CD8-positive, alpha-beta memory T cell (primary cell): ENCODE measurements at regions of chr6 and their contacts with region 1.

Region 1: DNA sequence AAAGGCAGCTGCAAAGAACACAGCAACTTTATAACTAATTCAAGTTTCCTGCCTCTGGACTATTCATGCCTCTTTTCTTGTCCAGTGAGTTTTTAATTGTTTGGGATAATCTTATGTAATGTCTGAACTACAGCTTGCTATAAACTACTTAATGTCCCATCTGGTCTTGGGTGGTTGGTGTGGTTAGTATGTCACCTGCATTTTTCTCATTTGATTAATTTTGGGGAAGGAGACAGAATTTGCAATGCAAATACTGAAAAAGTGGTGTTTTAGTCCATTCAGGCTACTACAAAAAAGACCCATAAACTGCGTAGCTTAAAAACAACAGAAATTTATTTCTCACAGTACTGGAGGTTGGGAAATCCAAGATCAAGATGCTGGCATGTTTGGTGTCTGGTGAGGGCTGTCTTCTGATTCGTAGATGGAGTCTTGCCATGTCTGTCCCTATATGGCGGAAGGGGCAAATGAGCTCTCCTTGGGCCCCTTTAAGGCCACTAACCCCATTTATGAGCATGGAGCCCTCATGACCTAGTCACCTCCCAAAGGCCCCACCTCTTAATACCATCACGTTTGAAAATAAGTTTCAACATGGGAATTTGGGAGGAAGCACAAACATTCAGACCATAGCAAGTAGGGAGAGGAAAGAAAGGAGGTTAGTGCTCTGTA is 22.4 kb downstream of the RNF8 start:
- DNase-seq: no peak
- H3K4me3 ChIP-seq: no peak overlapping the region
- H3K4me3 Mint-ChIP-seq: no peak overlapping the region
- H3K27ac ChIP-seq: no peak overlapping the region
- H3K27ac Mint-ChIP-seq: peak overlapping the region in 1 of 8 donors; percentile 71
- H3K4me1 ChIP-seq: no peaks in the 10 kb centered on the region
- H3K4me1 Mint-ChIP-seq: no peaks in the 10 kb centered on the region
- H3K27me3 ChIP-seq: no peaks in the 10 kb centered on the region
- H3K27me3 Mint-ChIP-seq: no peaks in the 10 kb centered on the region

Region 2: DNA sequence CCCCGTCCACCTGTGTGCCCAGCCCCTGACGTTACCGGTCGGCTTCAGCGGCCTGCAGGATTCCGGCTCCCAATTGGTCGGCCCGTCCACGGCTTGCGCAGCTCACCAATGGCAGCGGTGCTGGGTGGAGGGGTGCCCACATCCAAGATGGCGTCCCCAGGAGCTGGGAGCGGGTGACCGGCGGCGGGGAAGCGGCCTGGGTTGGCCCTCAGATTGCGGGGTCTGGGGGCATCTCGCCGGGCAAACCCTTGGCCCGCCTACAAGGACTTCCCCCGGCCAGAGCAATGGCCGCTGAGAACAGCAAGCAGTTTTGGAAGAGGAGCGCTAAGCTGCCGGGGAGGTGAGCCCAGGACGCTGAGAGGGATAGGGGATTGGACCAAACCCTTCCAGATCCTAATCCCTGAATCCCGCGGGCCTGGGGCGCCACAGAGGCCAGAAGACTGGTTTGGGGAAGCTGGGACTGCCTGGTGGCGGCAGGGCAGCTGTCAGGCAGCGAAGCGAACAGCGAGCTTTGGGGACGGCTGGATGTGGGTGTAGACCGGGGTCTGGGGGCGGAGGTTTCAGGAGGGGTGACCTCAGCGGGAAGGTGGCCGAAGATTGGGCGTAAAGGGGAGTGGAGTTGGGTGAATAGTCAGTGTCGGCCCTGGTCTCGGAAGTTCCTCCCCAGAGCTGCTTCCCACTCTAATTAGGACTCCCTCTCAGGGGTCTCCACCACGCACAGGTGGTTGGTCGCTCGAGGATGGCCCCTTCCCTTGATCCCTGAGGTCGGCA is 118.4 kb before region 1 on chr6 and contains the starts of genes TBC1D22B and TMEM217:
- CTCF ChIA-PET with region 1: no interaction called
- POLR2A ChIA-PET with region 1: no interaction called
- DNase-seq: peak; percentile 91 to 97 (median 92)
- H3K4me3 ChIP-seq: peak within 1 kb of the TSS; percentile 95
- H3K4me3 Mint-ChIP-seq: peak within 1 kb of the TSS; percentile 81 to 97 (median 91)
- H3K27ac ChIP-seq: peak within 1 kb of the TSS; percentile 95
- H3K27ac Mint-ChIP-seq: peak within 1 kb of the TSS; percentile 70 to 98 (median 92)
- H3K4me1 ChIP-seq: peaks cover 29% of the 10 kb centered on the region
- H3K4me1 Mint-ChIP-seq: peaks cover 39 to 55% (median 51%) of the 10 kb centered on the region in 3 donors
- H3K27me3 ChIP-seq: no peaks in the 10 kb centered on the region
- H3K27me3 Mint-ChIP-seq: peaks cover 0 to 7% of the 10 kb centered on the region in 2 donors
- total RNA-seq, gene TBC1D22B: 14.4 TPM
- total RNA-seq, gene TMEM217: 4.2 to 6.6 TPM

Region 3: GRCh38 chr6:37347670-37348111 is 28.5 kb before region 1 on chr6:
- CTCF ChIA-PET with region 1: no interaction called
- POLR2A ChIA-PET with region 1: no interaction called
- DNase-seq: no peak
- H3K4me3 ChIP-seq: no peak overlapping the region
- H3K4me3 Mint-ChIP-seq: no peak overlapping the region
- H3K27ac ChIP-seq: no peak overlapping the region
- H3K27ac Mint-ChIP-seq: no peak overlapping the region
- H3K4me1 ChIP-seq: no peaks in the 10 kb centered on the region
- H3K4me1 Mint-ChIP-seq: no peaks in the 10 kb centered on the region
- H3K27me3 ChIP-seq: no peaks in the 10 kb centered on the region
- H3K27me3 Mint-ChIP-seq: peaks cover 5 to 25% of the 10 kb centered on the region in 2 donors

Region 4: GRCh38 chr6:37365762-37366161 is 10.4 kb before region 1 on chr6:
- CTCF ChIA-PET with region 1: no interaction called
- POLR2A ChIA-PET with region 1: interaction called, 11 read pairs
- DNase-seq: no peak
- H3K4me3 ChIP-seq: no peak overlapping the region
- H3K4me3 Mint-ChIP-seq: no peak overlapping the region
- H3K27ac ChIP-seq: no peak overlapping the region
- H3K27ac Mint-ChIP-seq: no peak overlapping the region
- H3K4me1 ChIP-seq: no peaks in the 10 kb centered on the region
- H3K4me1 Mint-ChIP-seq: peaks cover 0 to 12% (median 7%) of the 10 kb centered on the region in 3 donors
- H3K27me3 ChIP-seq: no peaks in the 10 kb centered on the region
- H3K27me3 Mint-ChIP-seq: no peaks in the 10 kb centered on the region